B cell (primary cell): ENCODE measurements at regions of chr6 and their contacts with region 1.

Region 1: DNA sequence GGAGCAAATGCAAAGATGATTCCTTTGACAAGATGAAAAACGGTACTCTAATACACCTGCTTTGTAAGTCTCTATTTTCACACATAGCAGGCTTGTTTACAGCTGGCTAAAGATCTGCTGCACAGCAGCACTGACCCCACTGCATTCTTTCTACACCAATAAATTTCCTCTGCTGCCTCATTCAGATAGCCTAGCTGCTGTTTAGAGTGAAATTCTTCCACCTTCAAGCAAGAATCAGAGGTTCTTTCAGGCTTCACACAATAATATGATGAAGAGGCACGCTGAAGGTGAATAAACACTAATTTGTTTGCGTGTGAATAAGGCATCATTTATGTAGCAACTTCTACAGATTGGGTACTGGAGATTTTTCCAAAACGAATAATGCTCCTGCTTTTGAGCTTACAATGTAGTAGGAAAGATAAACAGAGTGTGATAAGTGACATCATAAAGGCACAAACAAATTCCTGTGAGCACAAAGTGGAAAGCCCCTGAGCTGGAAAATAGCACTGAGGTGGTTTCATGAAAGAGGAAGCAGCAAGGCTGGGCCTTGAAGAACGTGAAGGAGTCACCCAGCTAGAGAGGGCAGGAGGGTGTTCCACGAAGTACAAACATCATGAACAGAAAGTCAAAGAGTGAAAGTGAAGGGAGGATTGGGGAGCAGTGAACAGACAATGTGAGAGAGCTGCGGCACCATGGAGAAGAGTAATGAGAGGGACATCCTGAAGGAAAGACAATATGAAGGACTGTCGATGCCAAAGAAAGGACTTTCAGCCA is 543.4 kb downstream of the CD83 start:
- DNase-seq: peak; percentile 92
- ATAC-seq: peak; percentile 67
- H3K4me3 ChIP-seq: peak overlapping the region in 3 of 5 experiments; percentile 12 to 41 (median 20)
- H3K4me3 Mint-ChIP-seq: no peak overlapping the region
- H3K27ac ChIP-seq: peak overlapping the region; percentile 98
- H3K27ac Mint-ChIP-seq: no peak overlapping the region
- H3K4me1 ChIP-seq: peaks cover 94 to 96% of the 10 kb centered on the region in 2 donors
- H3K4me1 Mint-ChIP-seq: peaks cover 28% of the 10 kb centered on the region
- H3K27me3 ChIP-seq: no peaks in the 10 kb centered on the region
- H3K27me3 Mint-ChIP-seq: no peaks in the 10 kb centered on the region
- CTCF ChIP-seq: no peak

Region 2: DNA sequence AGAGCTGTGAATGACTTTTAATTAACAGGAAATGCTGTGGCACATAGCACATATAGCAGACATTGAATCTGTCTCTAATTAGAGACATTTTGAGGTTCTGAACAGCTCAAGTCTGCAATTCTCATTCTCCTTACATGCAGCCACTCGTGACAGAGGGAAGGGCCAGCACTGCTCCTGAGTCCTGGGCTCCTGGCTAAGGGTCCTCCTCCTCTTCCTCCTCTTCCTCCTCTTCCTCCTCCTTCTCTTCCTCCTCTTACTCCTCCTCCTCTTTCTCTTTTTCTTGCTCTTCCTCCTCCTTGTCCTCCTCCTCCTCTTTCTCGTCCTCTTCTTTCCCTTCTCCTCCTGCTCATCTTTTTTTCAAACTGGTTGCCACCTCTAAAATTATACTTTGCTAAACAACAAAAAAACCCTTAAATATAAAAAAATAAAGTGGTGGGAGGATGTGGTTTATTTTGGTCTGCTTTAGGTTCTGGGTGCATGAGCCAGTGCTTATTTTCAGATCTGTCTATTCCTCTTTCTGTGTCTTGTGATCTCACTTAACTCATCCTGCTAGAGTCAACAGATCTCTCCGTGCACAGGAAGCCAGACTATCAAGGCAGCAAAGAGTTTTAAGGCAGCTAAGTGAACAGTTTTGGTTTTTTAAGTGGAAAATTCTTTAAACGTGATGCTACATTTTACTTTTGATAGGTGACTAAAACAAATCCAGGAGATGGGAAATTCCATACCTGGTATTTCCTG is 384.2 kb before region 1 on chr6:
- CTCF ChIA-PET with region 1: no interaction called
- POLR2A ChIA-PET with region 1: interaction called, 4 read pairs
- intact Hi-C with region 1: loop called (anchors 2 kb)
- DNase-seq: peak; percentile 82
- ATAC-seq: peak; percentile 92
- H3K4me3 ChIP-seq: peak overlapping the region in 4 of 5 experiments; percentile 19 to 50 (median 24)
- H3K4me3 Mint-ChIP-seq: peak overlapping the region; percentile 58
- H3K27ac ChIP-seq: peak overlapping the region; percentile 97 to 99
- H3K27ac Mint-ChIP-seq: peak overlapping the region; percentile 92
- H3K4me1 ChIP-seq: peaks cover 61 to 79% of the 10 kb centered on the region in 2 donors
- H3K4me1 Mint-ChIP-seq: peaks cover 75% of the 10 kb centered on the region
- H3K27me3 ChIP-seq: no peaks in the 10 kb centered on the region
- H3K27me3 Mint-ChIP-seq: no peaks in the 10 kb centered on the region
- CTCF ChIP-seq: no peak

Region 3: DNA sequence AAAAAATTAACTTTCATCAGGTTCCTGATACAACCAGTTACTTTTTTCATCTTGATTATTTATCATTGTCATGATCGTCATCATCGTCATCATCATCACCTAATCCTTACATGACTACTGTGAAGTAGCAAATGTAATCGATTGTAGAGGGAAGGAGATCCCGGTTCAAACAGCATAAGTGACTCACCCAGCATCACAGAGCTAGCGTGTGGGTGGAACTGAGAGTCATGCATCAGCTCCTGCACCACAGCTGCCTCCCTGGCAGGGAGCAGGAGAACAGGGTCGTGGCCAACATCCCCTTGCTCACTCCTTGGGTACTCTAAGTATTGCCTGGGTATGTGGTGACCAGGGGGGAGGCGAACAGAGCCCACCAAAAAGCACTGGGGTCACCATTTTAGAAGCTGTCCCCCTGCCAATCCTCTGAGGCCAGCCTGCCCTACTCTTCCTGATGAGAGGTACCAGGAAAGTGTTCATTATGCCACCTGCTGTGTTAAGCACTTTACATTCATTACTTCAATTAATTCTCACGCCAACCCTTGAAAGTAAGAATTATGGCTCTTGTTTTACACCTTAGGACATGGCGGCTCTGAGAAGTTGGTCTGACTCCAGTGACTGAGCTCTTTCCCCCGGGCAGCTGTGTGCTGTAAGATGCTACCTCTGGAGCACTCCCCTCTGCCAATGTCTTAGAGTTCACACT is 118.2 kb before region 1 on chr6:
- CTCF ChIA-PET with region 1: no interaction called
- POLR2A ChIA-PET with region 1: no interaction called
- intact Hi-C with region 1: no loop called
- DNase-seq: peak; percentile 63
- ATAC-seq: peak; percentile 97
- H3K4me3 ChIP-seq: no peak overlapping the region
- H3K4me3 Mint-ChIP-seq: peak overlapping the region; percentile 52
- H3K27ac ChIP-seq: no peak overlapping the region
- H3K27ac Mint-ChIP-seq: peak overlapping the region; percentile 69
- H3K4me1 ChIP-seq: peaks cover 19 to 22% of the 10 kb centered on the region in 2 donors
- H3K4me1 Mint-ChIP-seq: peaks cover 35% of the 10 kb centered on the region
- H3K27me3 ChIP-seq: no peaks in the 10 kb centered on the region
- H3K27me3 Mint-ChIP-seq: no peaks in the 10 kb centered on the region
- CTCF ChIP-seq: no peak

Region 4: DNA sequence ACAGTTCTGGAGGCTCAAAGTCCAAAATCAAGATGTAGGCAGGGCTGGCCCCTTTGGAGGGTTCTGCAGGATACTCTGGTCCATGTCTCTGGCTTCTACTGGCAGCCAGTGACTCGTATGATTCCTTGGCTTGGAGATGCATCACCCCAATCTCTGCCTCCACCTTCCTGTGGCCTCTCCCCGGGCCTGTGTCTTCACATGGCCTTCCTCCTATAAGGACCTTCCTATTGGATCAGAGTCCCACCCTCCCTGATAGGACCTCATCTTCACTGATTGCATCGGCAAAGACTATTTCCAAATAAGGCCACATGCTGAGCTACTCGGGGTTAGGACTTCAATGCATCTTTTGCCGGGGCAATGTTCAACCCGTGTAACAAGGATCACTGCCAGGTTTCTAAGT is 34.4 kb before region 1 on chr6:
- CTCF ChIA-PET with region 1: no interaction called
- POLR2A ChIA-PET with region 1: no interaction called
- intact Hi-C with region 1: loop called (anchors 5 kb)
- DNase-seq: no peak
- ATAC-seq: no peak
- H3K4me3 ChIP-seq: no peak overlapping the region
- H3K4me3 Mint-ChIP-seq: no peak overlapping the region
- H3K27ac ChIP-seq: no peak overlapping the region
- H3K27ac Mint-ChIP-seq: no peak overlapping the region
- H3K4me1 ChIP-seq: peaks cover 7 to 16% of the 10 kb centered on the region in 2 donors
- H3K4me1 Mint-ChIP-seq: peaks cover 22% of the 10 kb centered on the region
- H3K27me3 ChIP-seq: no peaks in the 10 kb centered on the region
- H3K27me3 Mint-ChIP-seq: no peaks in the 10 kb centered on the region
- CTCF ChIP-seq: no peak

Region 5: DNA sequence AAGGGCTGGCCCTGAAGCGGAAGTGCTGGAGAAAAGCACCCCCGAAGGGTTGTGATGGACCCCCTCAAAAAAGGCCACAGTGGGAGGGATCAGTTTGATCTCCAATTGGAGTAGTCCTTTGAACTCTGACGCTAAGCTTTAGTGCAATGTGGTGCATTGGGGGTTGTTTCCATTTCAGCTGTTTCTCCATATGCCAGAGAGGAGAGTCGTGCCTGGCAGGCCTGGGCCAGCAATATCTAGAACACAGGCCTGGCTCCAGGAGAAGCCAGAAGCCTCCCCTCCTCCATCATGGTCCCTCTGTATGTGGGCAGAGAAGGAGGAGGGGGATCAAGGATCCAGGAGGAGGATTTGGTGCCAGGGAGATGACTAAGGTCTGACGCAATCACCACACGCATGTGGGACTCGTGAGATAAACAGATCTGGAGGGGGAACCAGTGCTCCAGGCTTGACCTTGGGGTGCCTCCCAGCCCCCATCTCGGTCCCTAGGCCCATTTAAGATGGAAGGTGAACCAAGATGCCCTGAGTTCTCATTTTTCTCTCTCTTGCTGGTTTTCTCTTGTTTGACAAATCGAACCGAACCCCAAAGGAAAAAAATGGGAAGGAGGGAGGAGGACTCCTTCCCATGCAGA is 67.5 kb after region 1 on chr6:
- CTCF ChIA-PET with region 1: interaction called, 5 read pairs
- POLR2A ChIA-PET with region 1: interaction called, 5 read pairs
- intact Hi-C with region 1: loop called (anchors 1 kb)
- DNase-seq: no peak
- ATAC-seq: no peak
- H3K4me3 ChIP-seq: peak overlapping the region in 1 of 5 experiments; percentile 15
- H3K4me3 Mint-ChIP-seq: peak overlapping the region; percentile 75
- H3K27ac ChIP-seq: peak overlapping the region; percentile 96 to 97
- H3K27ac Mint-ChIP-seq: peak overlapping the region; percentile 96
- H3K4me1 ChIP-seq: peaks cover 68 to 69% of the 10 kb centered on the region in 2 donors
- H3K4me1 Mint-ChIP-seq: peaks cover 81% of the 10 kb centered on the region
- H3K27me3 ChIP-seq: no peaks in the 10 kb centered on the region
- H3K27me3 Mint-ChIP-seq: no peaks in the 10 kb centered on the region
- CTCF ChIP-seq: no peak

Region 6: GRCh38 chr6:14876778-14877613 is 216.0 kb after region 1 on chr6:
- CTCF ChIA-PET with region 1: interaction called, 3 read pairs
- POLR2A ChIA-PET with region 1: no interaction called
- intact Hi-C with region 1: loop called (anchors 5 kb)
- DNase-seq: peak; percentile 66
- ATAC-seq: peak; percentile 88
- H3K4me3 ChIP-seq: peak overlapping the region in 1 of 5 experiments; percentile 5
- H3K4me3 Mint-ChIP-seq: peak overlapping the region; percentile 74
- H3K27ac ChIP-seq: peak overlapping the region; percentile 49 to 54
- H3K27ac Mint-ChIP-seq: peak overlapping the region; percentile 86
- H3K4me1 ChIP-seq: peaks cover 14 to 17% of the 10 kb centered on the region in 2 donors
- H3K4me1 Mint-ChIP-seq: peaks cover 31% of the 10 kb centered on the region
- H3K27me3 ChIP-seq: no peaks in the 10 kb centered on the region
- H3K27me3 Mint-ChIP-seq: no peaks in the 10 kb centered on the region
- CTCF ChIP-seq: no peak